Thyroid gland (tissue), 4 donors: ENCODE measurements at regions of chr9 and their contacts with region 1.

Region 1: DNA sequence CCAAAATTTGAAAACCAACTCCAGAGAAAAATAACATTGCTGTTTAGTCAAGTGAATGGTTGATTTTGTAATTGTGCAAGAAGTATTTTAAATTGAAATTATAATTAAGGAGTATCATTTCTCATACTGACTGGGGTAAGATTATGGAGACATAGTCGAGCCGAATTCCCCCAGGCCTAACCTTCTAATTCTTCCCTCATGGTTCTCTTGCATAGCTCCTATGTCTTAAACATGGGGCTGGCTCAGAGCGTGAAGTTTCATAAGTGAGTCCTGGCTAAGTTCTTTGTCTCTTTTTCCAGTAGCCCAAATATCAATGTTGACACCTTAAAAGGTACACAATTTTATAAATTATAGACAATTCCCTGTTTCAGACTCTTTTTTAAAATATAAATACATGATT is 46.7 kb upstream of the ANXA1 start:
- DNase-seq: no peak
- H3K4me3 ChIP-seq: no peak overlapping the region
- H3K27ac ChIP-seq: no peak overlapping the region
- H3K4me1 ChIP-seq: no peaks in the 10 kb centered on the region
- H3K27me3 ChIP-seq: no peaks in the 10 kb centered on the region
- CTCF ChIP-seq: no peak
- POLR2A ChIP-seq: no peak

Region 2: GRCh38 chr9:73183917-73184861 is 79.3 kb after region 1 on chr9:
- intact Hi-C with region 1: loop called (anchors 5 kb)
- DNase-seq: no peak
- H3K4me3 ChIP-seq: no peak overlapping the region
- H3K27ac ChIP-seq: no peak overlapping the region
- H3K4me1 ChIP-seq: no peaks in the 10 kb centered on the region
- H3K27me3 ChIP-seq: no peaks in the 10 kb centered on the region
- CTCF ChIP-seq: peak; percentile 26 to 74 (median 50)
- POLR2A ChIP-seq: no peak